GM18951 (cell line): ENCODE measurements at regions of chr2 and their contacts with region 1.

Region 1: GRCh38 chr2:65186872-65187851 is 40.5 kb upstream of the ACTR2 start:
- POLR2A ChIP-seq: no peak

Region 2: GRCh38 chr2:64404002-64404731 is 783.0 kb before region 1 on chr2:
- in situ Hi-C with region 1: no loop called
- POLR2A ChIP-seq: no peak

Region 3: GRCh38 chr2:65056215-65057053 is 130.7 kb before region 1 on chr2 and contains the start of gene CEP68:
- in situ Hi-C with region 1: loop called (anchors 25 kb)
- POLR2A ChIP-seq: peak; percentile 76